ENCODE measurements at regions of chr16 and their contacts with region 1.

Region 1: GRCh38 chr16:65136681-65137080 is 14.8 kb upstream of the CDH11 start:
- DNase-seq: no peak
- ATAC-seq: no peak

Region 2: GRCh38 chr16:65213866-65214595 is 77.3 kb after region 1 on chr16:
- intact Hi-C with region 1: no loop called
- DNase-seq: no peak
- ATAC-seq: no peak

Region 3: GRCh38 chr16:66270333-66270927 is 1133.7 kb after region 1 on chr16:
- intact Hi-C with region 1: loop called in 1 of 2 experiments (anchors 10 kb)
- DNase-seq: peak in 1 of 2 donors; percentile 63
- ATAC-seq: peak; percentile 80

Measured in left colon (tissue), 2 donors.